ENCODE measurements at regions of chr13 and their contacts with region 1.

Region 1: GRCh38 chr13:51286135-51287002 is 53.1 kb upstream of the SERPINE3 start:
- DNase-seq: peak; percentile 83
- H3K4me3 Mint-ChIP-seq: no peak overlapping the region
- H3K27ac Mint-ChIP-seq: no peak overlapping the region
- H3K4me1 Mint-ChIP-seq: peaks cover 22% of the 10 kb centered on the region
- H3K27me3 Mint-ChIP-seq: peaks cover 12% of the 10 kb centered on the region

Region 2: DNA sequence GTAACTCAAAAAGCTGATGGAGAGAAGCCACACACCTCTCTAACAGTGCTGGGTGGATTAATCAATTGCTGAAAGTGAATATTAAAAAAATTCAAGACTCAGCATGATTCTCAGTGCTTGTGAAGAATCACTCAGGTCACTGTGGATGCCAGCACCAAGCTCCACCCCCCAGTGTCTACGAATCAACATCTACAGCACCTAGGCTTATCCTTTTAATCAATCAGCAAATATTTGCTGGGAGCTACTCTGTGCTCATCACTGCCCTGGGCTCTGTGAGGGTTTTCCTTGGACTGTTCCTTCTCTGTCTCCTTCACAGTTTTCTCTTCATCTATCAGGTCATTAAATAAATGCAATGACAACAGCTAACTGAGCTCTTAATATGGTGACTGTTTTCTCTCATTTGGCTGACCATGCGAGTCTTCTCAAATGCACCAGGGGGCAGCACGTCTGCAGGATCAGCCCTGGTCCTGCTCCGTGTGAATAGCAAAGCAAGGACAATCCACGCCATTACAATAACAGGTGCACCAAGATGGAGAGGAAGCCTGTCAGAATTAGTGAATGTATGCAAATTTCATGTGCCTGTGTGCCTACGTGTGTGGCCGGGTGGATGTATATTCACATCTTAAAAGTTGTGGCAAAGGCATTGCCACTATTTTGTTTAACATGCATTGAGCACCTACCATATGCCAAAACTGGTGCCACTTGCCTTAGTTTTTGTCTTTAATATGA is 160.7 kb before region 1 on chr13:
- CTCF ChIA-PET with region 1: interaction called, 149 read pairs
- DNase-seq: peak; percentile 62
- H3K4me3 Mint-ChIP-seq: no peak overlapping the region
- H3K27ac Mint-ChIP-seq: no peak overlapping the region
- H3K4me1 Mint-ChIP-seq: peaks cover 7% of the 10 kb centered on the region
- H3K27me3 Mint-ChIP-seq: peaks cover 4% of the 10 kb centered on the region

Region 3: DNA sequence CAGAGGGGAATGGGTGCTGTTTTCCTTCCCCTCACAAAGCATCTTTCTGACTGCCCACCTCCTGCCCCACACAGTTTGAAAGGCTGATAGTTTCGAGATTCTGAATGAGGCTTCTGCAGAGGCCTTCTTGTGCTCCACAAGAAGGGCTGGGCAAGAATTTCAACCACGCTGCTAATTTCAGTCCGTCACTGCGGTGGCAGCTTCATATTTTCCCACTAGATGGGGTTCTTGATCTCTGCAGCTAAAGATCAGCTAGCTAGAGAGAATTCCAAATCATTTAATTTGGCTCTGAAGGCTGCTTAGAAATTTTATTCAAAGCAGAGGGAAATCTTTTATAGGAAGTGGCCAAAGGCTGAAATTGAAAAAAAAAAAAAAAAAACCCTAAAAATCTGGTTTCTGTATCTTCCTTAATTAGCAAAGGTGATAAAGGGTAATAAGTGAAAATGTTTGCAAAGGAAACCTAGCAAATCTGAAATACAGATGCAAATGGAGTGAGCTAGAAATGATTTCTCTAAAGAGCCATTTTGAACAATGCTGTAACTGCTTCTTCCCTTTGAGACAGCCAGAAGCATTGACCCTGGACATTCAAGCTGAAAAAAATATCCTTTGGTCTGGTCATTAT is 137.3 kb before region 1 on chr13:
- CTCF ChIA-PET with region 1: interaction called, 13 read pairs
- DNase-seq: no peak
- H3K4me3 Mint-ChIP-seq: no peak overlapping the region
- H3K27ac Mint-ChIP-seq: no peak overlapping the region
- H3K4me1 Mint-ChIP-seq: peaks cover 5% of the 10 kb centered on the region
- H3K27me3 Mint-ChIP-seq: peaks cover 24% of the 10 kb centered on the region

Region 4: DNA sequence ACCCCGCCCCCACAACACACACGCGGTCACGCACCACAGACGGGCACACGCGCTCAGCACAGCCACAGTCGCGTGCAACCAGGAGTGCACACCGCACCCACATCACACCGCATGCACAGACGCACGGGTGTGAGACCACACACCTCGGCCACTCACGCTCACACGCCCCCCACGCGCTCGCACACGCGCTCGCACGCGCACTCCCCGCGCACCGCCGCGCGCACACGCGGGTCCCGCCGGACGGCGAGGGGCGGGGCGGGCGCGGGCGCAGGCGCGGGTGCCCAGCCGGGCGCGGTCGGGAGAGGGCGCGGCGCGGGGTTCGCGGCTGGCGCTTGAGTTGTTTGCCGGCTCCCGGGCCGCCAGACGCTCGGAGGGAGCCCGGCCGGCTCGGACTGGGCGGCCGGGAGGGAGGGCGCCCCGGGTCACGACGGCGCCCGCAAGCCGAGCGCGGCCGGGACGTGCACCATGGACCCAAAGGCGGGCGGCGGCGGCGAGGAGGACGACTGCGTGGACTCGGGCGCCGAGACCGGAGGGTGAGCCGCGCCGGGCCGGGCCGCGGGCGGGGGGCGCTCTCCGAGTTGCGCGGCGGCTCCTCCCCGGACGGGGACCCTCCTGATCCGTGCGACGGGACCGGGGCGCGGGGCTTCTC is 64.2 kb before region 1 on chr13 and contains the start of gene FAM124A:
- CTCF ChIA-PET with region 1: interaction called, 22 read pairs
- DNase-seq: peak; percentile 54
- H3K4me3 Mint-ChIP-seq: peak within 1 kb of the TSS; percentile 68
- H3K27ac Mint-ChIP-seq: no peak within 1 kb of the TSS
- H3K4me1 Mint-ChIP-seq: peaks cover 3% of the 10 kb centered on the region
- H3K27me3 Mint-ChIP-seq: peaks cover 75% of the 10 kb centered on the region

Region 5: GRCh38 chr13:51269039-51269438 is 17.3 kb before region 1 on chr13:
- CTCF ChIA-PET with region 1: interaction called, 10 read pairs
- DNase-seq: no peak
- H3K4me3 Mint-ChIP-seq: no peak overlapping the region
- H3K27ac Mint-ChIP-seq: no peak overlapping the region
- H3K4me1 Mint-ChIP-seq: no peaks in the 10 kb centered on the region
- H3K27me3 Mint-ChIP-seq: peaks cover 16% of the 10 kb centered on the region